Sciatic nerve (tissue), 2 donors: ENCODE measurements at regions of chr1 and their contacts with region 1.

Region 1: GRCh38 chr1:35532497-35533223 is 24.5 kb downstream of the KIAA0319L start:
- DNase-seq: no peak
- ATAC-seq: no peak

Region 2: GRCh38 chr1:35915693-35916092 is 383.0 kb after region 1 on chr1:
- intact Hi-C with region 1: no loop called
- DNase-seq: no peak
- ATAC-seq: no peak

Region 3: GRCh38 chr1:36329792-36330191 is 797.1 kb after region 1 on chr1:
- intact Hi-C with region 1: loop called (anchors 5 kb)
- DNase-seq: no peak
- ATAC-seq: no peak